Activated T-helper 1 cell treated with anti-CD3 and anti-CD28 coated beads, Interleukin-12 subunit alpha, Interleukin-12 subunit beta, Interleukin-2, Interleukin-4 antibody, amounts not matched to agents 30 ng/mL and 10 ng/mL and 1 ng/mL, durations not matched to agents 14 hours and 24 hours and 36 hours (primary cell): ENCODE measurements at regions of chr18 and their contacts with region 1.

Region 1: DNA sequence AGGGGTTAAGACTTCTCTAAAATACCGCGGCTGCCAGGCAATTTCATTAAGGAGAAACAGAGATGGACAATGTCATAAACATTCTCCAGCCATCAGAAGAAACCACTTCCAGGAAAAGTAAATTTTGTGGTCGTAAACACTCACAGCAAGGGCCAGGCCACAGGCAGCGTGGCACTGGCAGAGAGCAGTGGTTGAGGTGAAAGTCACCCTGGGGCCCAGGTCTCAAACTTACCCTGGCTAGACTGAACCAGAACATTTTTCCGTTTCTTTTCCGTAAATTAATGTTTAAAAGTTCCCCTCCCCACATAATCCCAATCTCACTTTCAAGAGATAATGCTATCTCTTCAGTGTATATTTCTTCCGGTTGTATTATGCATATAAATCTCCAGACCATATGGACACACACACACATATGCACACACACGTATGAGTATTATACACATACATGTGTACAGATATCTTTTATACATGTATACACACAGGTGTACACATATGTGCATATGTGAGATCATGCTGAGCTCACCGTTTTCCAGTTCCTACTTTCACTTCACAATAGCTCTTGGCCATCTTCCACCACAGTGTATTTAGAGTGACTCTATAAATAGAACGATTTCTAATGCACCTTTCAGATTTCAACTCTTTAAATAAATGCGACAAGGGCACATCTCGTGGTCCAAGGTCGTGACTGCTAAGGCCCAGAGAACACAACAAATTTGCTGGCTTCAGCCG is 90.1 kb downstream of the MALT1 start:
- DNase-seq: no peak
- H3K4me3 Mint-ChIP-seq: no peak overlapping the region
- H3K27ac Mint-ChIP-seq: no peak overlapping the region
- H3K4me1 Mint-ChIP-seq: peaks cover 11% of the 10 kb centered on the region
- H3K27me3 Mint-ChIP-seq: peaks cover 16% of the 10 kb centered on the region

Region 2: DNA sequence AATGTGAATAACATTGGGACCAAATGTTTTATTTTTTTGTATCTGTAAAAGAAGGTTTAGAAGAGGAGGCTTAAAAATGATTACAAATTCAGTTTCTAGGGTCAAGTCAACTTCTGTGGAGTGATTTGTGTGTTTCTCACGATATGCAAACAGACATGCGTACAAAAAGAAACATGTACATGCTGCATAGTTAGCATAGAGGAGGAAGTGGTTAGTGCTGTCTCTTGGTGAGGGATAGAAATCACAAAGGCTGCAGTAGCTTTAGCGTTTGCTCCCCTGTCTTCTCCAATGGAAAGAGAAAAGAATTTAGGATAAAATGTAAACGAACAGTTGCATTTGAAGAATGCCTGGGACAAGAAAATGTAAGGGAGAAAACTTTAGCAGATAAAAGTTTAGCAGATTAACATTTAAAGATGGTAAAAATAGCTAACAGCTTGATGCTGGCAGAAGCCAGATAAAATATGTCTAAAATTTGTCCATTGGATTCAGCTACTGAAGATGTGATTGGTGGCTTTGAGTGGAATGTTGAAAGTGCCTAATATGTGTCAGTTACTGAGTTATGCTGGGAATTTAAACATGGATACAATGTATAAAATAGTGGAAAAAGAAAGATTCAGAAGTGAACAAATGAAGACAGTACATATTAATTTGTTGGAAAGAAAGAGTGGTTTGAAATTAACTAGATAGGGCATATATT is 45.2 kb before region 1 on chr18:
- intact Hi-C with region 1: loop called (anchors 5 kb)
- DNase-seq: no peak
- H3K4me3 Mint-ChIP-seq: peak overlapping the region; percentile 34
- H3K27ac Mint-ChIP-seq: peak overlapping the region; percentile 32
- H3K4me1 Mint-ChIP-seq: peaks cover 53% of the 10 kb centered on the region
- H3K27me3 Mint-ChIP-seq: no peaks in the 10 kb centered on the region

Region 3: GRCh38 chr18:59072727-59073421 is 311.5 kb after region 1 on chr18:
- intact Hi-C with region 1: no loop called
- DNase-seq: no peak
- H3K4me3 Mint-ChIP-seq: no peak overlapping the region
- H3K27ac Mint-ChIP-seq: no peak overlapping the region
- H3K4me1 Mint-ChIP-seq: no peaks in the 10 kb centered on the region
- H3K27me3 Mint-ChIP-seq: peaks cover 4% of the 10 kb centered on the region